ENCODE measurements at regions of chr1 and their contacts with region 1.

Region 1: GRCh38 chr1:231983588-231984193 is 357.1 kb downstream of the DISC1 start:
- DNase-seq: no peak
- H3K4me3 ChIP-seq: no peak overlapping the region
- CTCF ChIP-seq: no peak

Region 2: DNA sequence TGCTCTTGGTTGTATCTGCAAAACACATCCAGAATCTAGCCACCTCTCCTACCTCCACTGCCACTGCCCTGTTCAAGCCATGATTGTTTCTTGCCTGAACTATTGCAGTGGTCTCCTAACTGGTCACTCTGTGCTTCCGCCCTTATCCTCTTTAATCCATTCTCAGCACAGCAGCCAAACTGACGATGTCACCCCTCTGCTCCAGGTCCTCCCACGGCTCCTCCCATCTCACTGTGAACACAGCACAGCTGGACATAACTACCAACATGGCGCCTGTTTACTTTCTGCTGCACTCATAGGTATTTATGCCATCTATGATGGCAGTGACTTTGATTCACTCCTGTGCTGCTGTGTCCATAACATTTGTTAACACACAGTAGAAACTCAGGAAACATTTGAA is 49.6 kb after region 1 on chr1:
- in situ Hi-C with region 1: loop called (anchors 5 kb)
- DNase-seq: no peak
- H3K4me3 ChIP-seq: no peak overlapping the region
- CTCF ChIP-seq: no peak

Measured in astrocyte of the cerebellum (primary cell).